Psoas muscle (tissue), 8 donors: ENCODE measurements at regions of chr11 and their contacts with region 1.

Region 1: GRCh38 chr11:14454861-14455632 is 44.6 kb downstream of the COPB1 start:
- DNase-seq: no peak
- ATAC-seq: peak; percentile 39 to 83 (median 60)
- H3K4me3 ChIP-seq: no peak overlapping the region
- H3K27ac ChIP-seq: peak overlapping the region; percentile 3
- H3K4me1 ChIP-seq: peaks cover 4% of the 10 kb centered on the region
- H3K27me3 ChIP-seq: no peaks in the 10 kb centered on the region
- CTCF ChIP-seq: peak; percentile 72

Region 2: DNA sequence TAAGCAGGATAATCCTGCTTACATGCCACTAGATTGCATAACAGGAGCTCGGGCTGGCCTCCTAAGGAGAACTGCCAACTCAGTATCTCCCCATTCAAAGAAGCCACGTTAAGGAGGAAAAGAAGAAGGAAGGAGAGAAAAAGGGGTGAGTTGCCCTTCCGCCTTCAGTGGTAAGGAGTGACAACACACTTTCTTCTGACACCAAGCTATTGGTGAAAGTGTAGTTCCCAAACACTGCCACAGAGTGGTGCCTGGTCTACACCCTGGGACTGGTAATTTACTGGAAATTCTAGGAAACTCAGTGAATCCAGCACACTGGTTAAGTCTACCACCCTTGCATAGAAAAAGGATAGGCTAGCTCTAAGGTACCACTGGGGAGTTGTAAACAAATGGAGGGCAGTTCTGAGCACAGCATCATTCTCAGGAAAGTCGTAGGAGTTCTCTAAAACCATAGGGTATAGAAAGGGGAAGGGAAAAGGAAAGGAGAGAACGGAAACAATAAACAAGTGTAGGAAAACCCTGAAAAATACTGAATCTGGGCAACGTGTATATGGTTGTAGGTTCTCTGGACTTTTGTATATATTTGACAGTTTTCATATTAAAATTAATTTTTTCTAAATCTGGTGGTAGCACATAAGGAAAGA is 154.3 kb before region 1 on chr11:
- intact Hi-C with region 1: loop called (anchors 1 to 5 kb)
- DNase-seq: peak; percentile 33 to 63
- ATAC-seq: peak; percentile 81 to 89 (median 84)
- H3K4me3 ChIP-seq: no peak overlapping the region
- H3K27ac ChIP-seq: no peak overlapping the region
- H3K4me1 ChIP-seq: peaks cover 56% of the 10 kb centered on the region
- H3K27me3 ChIP-seq: no peaks in the 10 kb centered on the region
- CTCF ChIP-seq: peak; percentile 83

Region 3: DNA sequence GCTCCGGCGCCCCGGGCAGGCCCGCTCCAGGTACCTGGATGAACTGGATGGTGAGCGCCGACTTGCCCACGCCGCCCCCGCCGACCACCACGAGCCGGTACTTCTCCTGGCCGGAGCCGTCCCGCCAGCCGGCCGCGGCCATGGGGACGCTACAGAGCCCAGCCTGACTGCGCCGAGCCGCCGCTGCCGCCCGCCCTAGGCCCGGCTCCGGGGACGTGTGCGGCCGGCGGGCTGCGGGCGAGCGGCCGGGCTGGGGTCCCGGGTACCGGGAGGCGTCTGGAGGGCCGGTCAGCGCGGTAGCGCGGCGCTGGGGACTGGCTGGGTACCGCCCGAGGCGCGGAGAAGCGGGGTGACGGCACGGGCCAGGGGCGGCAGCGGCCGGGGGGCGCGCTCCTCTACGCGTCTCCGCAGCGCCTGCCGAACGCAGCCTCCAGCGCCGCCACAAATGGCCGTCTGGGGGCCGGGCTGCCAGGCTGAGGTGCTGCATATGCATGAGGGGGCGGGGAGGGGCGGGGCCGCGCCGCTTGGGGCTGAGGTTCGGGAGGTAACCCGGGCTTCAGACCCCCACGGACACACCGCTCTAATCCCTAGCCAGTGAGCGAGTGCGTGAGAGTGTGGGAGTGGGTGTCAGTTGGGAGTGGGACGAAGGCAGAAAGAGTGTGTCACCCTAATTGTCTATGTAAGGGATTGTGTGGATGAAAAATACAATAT is 96.2 kb before region 1 on chr11 and contains the start of gene RRAS2:
- intact Hi-C with region 1: loop called in 1 of 2 experiments (anchors 1 kb)
- DNase-seq: peak; percentile 78 to 89
- ATAC-seq: peak; percentile 82 to 88 (median 84)
- H3K4me3 ChIP-seq: peak within 1 kb of the TSS; percentile 95
- H3K27ac ChIP-seq: peak within 1 kb of the TSS; percentile 95
- H3K4me1 ChIP-seq: peaks cover 30% of the 10 kb centered on the region
- H3K27me3 ChIP-seq: no peaks in the 10 kb centered on the region
- CTCF ChIP-seq: no peak
- total RNA-seq, gene RRAS2: 44.3 to 89.8 (median 63.9) TPM

Region 4: DNA sequence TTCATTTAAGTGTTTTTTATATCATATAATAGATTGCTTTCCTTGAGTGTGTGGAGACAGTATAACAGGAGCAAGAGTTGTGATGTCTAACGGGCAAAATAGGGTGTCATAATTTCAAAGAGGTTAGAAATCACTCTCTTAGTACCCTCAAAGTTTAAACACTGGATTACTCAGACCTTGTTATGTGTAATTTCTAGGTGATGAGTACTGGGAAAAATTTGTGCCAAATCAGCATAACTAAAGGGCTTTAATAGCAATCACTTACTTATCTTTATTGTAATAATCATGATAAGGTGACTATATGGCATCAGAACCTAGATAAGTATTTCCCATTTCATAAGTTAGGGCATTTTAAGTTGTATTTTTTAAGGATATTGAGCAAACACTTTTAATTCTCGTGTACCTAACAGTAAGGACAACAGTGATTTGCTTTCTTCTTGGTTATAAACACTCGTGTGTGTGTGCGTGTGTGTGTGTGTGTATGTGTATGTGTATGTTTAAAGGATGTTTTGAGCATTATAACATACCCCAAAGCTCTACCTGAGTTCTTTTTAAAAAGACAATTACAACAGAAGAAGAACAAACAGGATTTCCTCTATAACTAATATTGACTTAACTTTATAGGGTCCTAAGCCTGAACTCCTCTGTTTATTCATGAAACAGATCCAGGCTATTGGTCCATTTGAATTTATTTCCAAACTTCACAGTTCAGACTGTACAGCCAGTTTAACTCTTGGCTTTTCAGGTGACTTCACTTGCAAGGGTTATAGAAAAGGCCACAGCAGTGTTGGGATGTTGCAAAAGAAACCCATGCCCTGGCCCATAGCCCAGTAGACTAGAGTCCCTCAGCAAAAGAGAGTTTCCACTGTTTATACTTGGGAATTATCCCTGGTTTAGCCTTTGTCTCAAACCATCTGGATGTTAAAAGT is 164.8 kb after region 1 on chr11:
- intact Hi-C with region 1: no loop called
- DNase-seq: no peak
- ATAC-seq: no peak
- H3K4me3 ChIP-seq: no peak overlapping the region
- H3K27ac ChIP-seq: no peak overlapping the region
- H3K4me1 ChIP-seq: no peaks in the 10 kb centered on the region
- H3K27me3 ChIP-seq: no peaks in the 10 kb centered on the region
- CTCF ChIP-seq: no peak